K562 (cell line): ENCODE measurements at regions of chr19 and their contacts with region 1.

Region 1: DNA sequence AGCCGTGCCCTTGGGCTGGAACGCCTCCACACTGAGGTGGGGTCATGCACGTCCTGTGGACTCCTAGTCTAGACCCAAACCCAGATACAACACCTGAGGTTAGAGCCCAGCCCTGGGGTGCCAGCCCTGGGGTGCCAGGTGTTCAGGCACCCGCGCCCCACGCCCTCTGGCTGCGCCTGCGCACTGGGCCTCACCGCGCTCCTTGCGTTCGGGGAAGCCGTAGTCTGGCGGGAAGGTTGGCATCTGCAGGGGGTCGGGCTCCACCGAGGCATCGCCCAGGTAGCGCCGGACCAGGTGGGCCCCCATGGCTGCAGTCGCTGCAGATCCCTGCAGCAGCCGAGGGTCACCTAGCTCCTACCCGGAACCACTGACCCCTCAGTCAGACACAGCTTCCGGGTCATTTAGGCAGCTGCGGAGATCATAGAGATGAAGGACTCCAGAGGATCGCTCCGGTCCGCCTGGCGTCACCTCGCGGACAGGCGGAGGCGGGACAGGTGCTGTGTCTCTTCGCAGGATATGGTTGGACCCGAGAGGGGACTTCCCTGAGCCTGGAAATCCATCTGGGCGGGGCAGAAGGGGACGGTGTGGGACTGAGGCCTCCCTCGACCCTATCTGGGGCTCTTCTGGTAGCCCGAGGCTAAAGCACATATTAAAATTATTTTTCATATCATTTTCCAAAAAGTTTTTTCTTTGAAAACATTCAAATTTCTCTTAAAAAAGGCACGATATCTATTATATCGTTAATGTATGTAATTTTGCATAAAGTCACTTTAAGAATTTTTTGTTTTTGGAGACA is at the start of gene NDUFB7:
- DNase-seq: peak; percentile 87 to 98 (median 88)
- ATAC-seq: peak; percentile 94
- H3K4me3 ChIP-seq: peak within 1 kb of the TSS; percentile 86
- H3K27ac ChIP-seq: peak within 1 kb of the TSS; percentile 80
- H3K4me1 ChIP-seq: peaks cover 10 to 52% of the 10 kb centered on the region in 2 experiments; a peak in 4 of 5 replicates
- H3K27me3 ChIP-seq: no peaks in the 10 kb centered on the region; a peak in 1 of 5 replicates
- CTCF ChIP-seq: peak; percentile 85 to 91 (median 88)
- EP300 ChIP-seq: no peak
- POLR2A ChIP-seq: peak; percentile 91
- RAD21 ChIP-seq: peak; percentile 34 to 42; a peak in 3 of 4 replicates
- polyA plus RNA-seq, gene NDUFB7: 31.3 to 91.8 TPM

Region 2: DNA sequence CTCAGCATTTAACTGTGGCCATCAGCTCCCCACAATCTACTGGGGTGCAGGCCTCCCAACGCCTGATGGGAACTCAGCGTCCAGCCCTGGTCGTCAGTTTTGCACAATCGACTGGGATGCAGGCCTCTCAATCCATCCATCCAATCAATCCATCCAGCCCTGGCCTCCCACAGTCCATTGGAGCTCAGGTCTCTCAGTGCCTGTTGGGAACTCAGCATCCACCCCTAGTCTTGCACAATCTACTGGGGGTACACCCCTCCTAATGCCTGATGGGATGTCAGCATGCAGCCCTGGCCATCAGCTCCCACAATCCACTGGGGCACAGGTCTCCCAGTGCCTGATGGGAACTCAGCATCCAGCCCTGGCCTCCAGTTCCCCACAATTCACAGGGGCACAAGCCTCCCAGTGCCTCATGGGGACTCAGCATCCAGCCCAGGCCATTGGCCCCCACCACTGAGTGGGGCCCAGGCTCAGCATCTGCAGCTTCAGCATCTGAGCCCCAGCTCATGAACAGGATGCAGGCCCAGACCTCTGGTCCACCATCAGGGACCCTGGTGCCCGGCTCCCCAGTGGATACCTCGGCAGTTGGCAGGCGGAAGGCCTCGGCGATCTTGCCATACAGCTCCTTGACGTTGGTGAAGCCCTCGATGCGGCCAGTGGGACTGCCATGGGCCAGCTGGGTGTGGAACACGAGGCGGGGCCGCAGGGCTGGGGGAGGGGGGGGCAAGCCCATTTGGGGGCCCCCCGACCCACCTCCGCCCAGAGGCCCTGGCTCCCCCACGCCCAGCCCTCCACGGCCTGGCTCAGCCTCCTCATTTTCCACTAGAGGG is 89.6 kb before region 1 on chr19:
- CTCF ChIA-PET with region 1: no interaction called
- POLR2A ChIA-PET with region 1: no interaction called
- in situ Hi-C with region 1: no loop called
- intact Hi-C with region 1: no loop called
- DNase-seq: peak in 1 of 4 experiments; percentile 40
- ATAC-seq: peak; percentile 61
- H3K4me3 ChIP-seq: no peak overlapping the region
- H3K27ac ChIP-seq: no peak overlapping the region
- H3K4me1 ChIP-seq: peaks cover 2 to 28% of the 10 kb centered on the region in 2 experiments; a peak in 3 of 5 replicates
- H3K27me3 ChIP-seq: no peaks in the 10 kb centered on the region
- CTCF ChIP-seq: no peak
- EP300 ChIP-seq: no peak
- POLR2A ChIP-seq: no peak
- RAD21 ChIP-seq: no peak

Region 3: DNA sequence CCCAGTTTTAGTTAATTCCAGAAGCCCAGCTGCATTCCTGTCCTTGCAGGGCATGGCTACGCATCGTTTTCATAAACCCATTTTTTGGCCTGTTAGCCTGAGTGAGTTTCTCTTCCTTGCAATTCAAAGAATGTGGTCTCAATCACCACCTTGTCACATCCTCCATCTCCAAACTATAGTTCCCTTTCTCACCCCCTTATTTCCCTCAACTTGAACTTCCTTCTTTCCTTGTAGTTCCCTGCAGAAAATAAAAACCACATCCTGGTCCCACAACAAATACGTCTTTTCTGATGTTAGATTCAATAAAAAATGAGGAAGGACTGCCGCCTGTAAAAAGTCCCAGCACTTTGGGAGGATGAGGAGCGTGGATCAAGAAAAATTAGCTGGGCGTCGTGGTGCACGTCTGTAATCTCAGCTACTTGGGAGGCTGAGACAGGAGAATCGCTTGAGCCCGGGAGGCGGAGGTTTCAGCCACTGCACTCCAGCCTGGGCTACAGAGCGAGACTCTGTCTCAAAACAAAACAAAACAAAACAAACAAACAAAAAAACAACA is 89.6 kb after region 1 on chr19:
- CTCF ChIA-PET with region 1: no interaction called
- POLR2A ChIA-PET with region 1: no interaction called
- in situ Hi-C with region 1: no loop called
- intact Hi-C with region 1: no loop called
- DNase-seq: no peak
- ATAC-seq: no peak
- H3K4me3 ChIP-seq: no peak overlapping the region
- H3K27ac ChIP-seq: no peak overlapping the region
- H3K4me1 ChIP-seq: no peaks in the 10 kb centered on the region
- H3K27me3 ChIP-seq: peaks cover 18 to 21% of the 10 kb centered on the region in 2 experiments
- CTCF ChIP-seq: no peak
- EP300 ChIP-seq: no peak
- POLR2A ChIP-seq: no peak
- RAD21 ChIP-seq: no peak

Region 4: DNA sequence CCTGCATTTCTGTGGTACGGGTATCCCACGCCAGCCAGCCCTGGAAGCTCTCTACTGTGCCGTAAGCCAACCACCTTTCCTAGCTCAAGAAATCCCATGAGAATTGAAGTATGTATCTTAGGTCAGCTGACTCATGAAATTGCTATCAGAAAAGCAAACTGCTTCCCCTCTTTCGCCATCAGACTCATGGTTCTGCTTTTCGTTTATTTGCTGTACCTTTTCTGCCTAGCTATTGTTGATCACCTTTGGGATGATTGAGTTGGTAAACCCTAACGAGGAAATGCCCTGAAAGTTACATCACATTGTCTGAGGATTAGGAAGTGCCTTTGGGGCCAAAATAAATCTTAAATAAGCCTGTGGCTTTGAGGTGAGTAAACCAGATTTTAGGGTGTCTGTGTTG is 102.9 kb after region 1 on chr19 and contains the start of gene ADGRE3:
- CTCF ChIA-PET with region 1: no interaction called
- POLR2A ChIA-PET with region 1: no interaction called
- in situ Hi-C with region 1: no loop called
- intact Hi-C with region 1: no loop called
- DNase-seq: no peak
- ATAC-seq: no peak
- H3K4me3 ChIP-seq: no peak within 1 kb of the TSS
- H3K27ac ChIP-seq: no peak within 1 kb of the TSS
- H3K4me1 ChIP-seq: peaks cover 0 to 3% of the 10 kb centered on the region in 2 experiments; a peak in 1 of 5 replicates
- H3K27me3 ChIP-seq: peaks cover 11 to 30% of the 10 kb centered on the region in 2 experiments; a peak in 4 of 5 replicates
- CTCF ChIP-seq: no peak
- EP300 ChIP-seq: no peak
- POLR2A ChIP-seq: no peak
- RAD21 ChIP-seq: no peak
- polyA plus RNA-seq, gene ADGRE3: not detected

Region 5: DNA sequence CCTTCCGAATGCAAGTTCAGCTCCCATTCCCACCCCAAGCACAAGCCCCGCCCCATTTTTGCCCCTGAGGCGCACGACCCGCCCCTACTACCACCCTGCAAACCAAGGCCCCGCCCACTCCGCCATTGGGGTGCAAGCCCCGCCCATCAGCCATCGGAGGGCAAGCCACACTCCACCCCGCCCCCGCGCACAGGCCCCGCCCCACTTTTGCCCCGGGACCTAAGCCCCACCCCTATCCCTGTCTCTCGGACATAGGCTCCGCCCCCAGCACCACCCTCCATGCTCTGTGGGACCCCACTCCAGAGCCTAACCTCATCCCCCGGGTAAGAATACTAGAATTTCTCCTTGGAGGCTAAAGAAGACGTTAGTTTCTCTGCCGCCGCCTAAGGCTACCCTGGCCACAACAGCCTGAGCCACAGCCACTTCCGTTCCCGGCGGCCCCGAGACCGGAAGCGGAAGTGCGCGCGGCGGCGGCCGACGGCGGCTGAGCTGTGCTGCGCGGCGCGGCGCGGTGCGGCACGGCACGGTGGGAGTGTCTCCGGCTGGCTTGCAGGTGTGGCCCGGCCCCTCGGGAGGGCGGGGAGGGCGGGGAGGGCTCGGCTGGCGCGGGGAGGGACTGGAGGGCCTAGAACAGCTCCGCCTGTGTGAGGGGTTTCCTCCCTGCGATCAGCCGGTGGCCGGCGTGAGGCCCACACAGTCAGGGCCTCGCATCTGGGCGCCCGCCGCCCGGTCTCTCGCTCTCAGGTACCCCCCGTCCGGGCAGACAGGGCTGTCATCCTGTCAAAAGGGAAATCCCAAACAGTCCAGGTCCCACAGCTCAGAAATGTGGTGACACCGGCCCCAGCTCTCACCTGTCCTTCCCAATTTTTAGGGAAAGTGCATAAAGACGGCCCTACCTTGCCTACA is 118.0 kb after region 1 on chr19 and contains the start of gene ZNF333:
- CTCF ChIA-PET with region 1: interaction called, 4 read pairs
- POLR2A ChIA-PET with region 1: interaction called, 5 read pairs
- in situ Hi-C with region 1: loop called (anchors 5 kb)
- intact Hi-C with region 1: loop called (anchors 1 kb)
- DNase-seq: peak; percentile 95 to 99 (median 99)
- ATAC-seq: peak; percentile 99
- H3K4me3 ChIP-seq: peak within 1 kb of the TSS; percentile 65
- H3K27ac ChIP-seq: peak within 1 kb of the TSS; percentile 98
- H3K4me1 ChIP-seq: peaks cover 3 to 8% of the 10 kb centered on the region in 2 experiments; a peak in 3 of 5 replicates
- H3K27me3 ChIP-seq: no peaks in the 10 kb centered on the region
- CTCF ChIP-seq: no peak
- EP300 ChIP-seq: no peak
- POLR2A ChIP-seq: peak; percentile 93
- RAD21 ChIP-seq: no peak
- polyA plus RNA-seq, gene ZNF333: 2.8 to 3.3 TPM

Region 6: GRCh38 chr19:14890643-14891379 is 318.9 kb after region 1 on chr19:
- CTCF ChIA-PET with region 1: interaction called, 3 read pairs
- POLR2A ChIA-PET with region 1: no interaction called
- in situ Hi-C with region 1: loop called (anchors 10 kb)
- intact Hi-C with region 1: loop called (anchors 1 kb)
- DNase-seq: peak; percentile 25 to 74 (median 44)
- ATAC-seq: peak; percentile 78
- H3K4me3 ChIP-seq: no peak overlapping the region
- H3K27ac ChIP-seq: no peak overlapping the region
- H3K4me1 ChIP-seq: peaks cover 0 to 12% of the 10 kb centered on the region in 2 experiments; a peak in 2 of 5 replicates
- H3K27me3 ChIP-seq: peaks cover 4 to 8% of the 10 kb centered on the region in 2 experiments; a peak in 2 of 5 replicates
- CTCF ChIP-seq: no peak
- EP300 ChIP-seq: peak; percentile 90
- POLR2A ChIP-seq: no peak
- RAD21 ChIP-seq: no peak